Sigmoid colon (tissue), 7 donors: ENCODE measurements at regions of chr7 and their contacts with region 1.

Region 1: GRCh38 chr7:28853834-28854749 is 104.0 kb downstream of the TRIL start:
- DNase-seq: peak; percentile 87
- H3K4me3 ChIP-seq: peak overlapping the region; percentile 34 to 56 (median 55)
- H3K27ac ChIP-seq: peak overlapping the region in 2 of 4 donors; percentile 19 to 30
- H3K4me1 ChIP-seq: peaks cover 0 to 19% (median 12%) of the 10 kb centered on the region in 4 donors
- H3K27me3 ChIP-seq: no peaks in the 10 kb centered on the region
- CTCF ChIP-seq: peak; percentile 86 to 94 (median 92)
- EP300 ChIP-seq: no peak
- POLR2A ChIP-seq: no peak

Region 2: GRCh38 chr7:28389504-28390395 is 464.3 kb before region 1 on chr7:
- intact Hi-C with region 1: loop called (anchors 1 kb)
- DNase-seq: no peak
- H3K4me3 ChIP-seq: peak overlapping the region; percentile 20 to 45 (median 38)
- H3K27ac ChIP-seq: peak overlapping the region in 1 of 4 donors; percentile 57
- H3K4me1 ChIP-seq: peaks cover 0 to 13% (median 11%) of the 10 kb centered on the region in 4 donors
- H3K27me3 ChIP-seq: no peaks in the 10 kb centered on the region
- CTCF ChIP-seq: peak; percentile 57 to 78 (median 66)
- EP300 ChIP-seq: no peak
- POLR2A ChIP-seq: no peak

Region 3: GRCh38 chr7:28408960-28409715 is 445.0 kb before region 1 on chr7:
- intact Hi-C with region 1: loop called (anchors 5 kb)
- DNase-seq: peak; percentile 99
- H3K4me3 ChIP-seq: peak overlapping the region; percentile 45 to 77 (median 64)
- H3K27ac ChIP-seq: peak overlapping the region; percentile 86 to 93 (median 92)
- H3K4me1 ChIP-seq: peaks cover 0 to 43% (median 23%) of the 10 kb centered on the region in 4 donors
- H3K27me3 ChIP-seq: no peaks in the 10 kb centered on the region
- CTCF ChIP-seq: no peak
- EP300 ChIP-seq: peak in 1 of 4 donors; percentile 6
- POLR2A ChIP-seq: peak; percentile 50 to 67

Region 4: GRCh38 chr7:28536259-28536658 is 317.8 kb before region 1 on chr7:
- intact Hi-C with region 1: loop called (anchors 5 kb)
- DNase-seq: peak; percentile 75
- H3K4me3 ChIP-seq: no peak overlapping the region
- H3K27ac ChIP-seq: no peak overlapping the region
- H3K4me1 ChIP-seq: peaks cover 0 to 6% (median 2%) of the 10 kb centered on the region in 4 donors
- H3K27me3 ChIP-seq: no peaks in the 10 kb centered on the region
- CTCF ChIP-seq: peak; percentile 36 to 79 (median 50)
- EP300 ChIP-seq: no peak
- POLR2A ChIP-seq: no peak

Region 5: GRCh38 chr7:28615091-28615490 is 239.0 kb before region 1 on chr7:
- intact Hi-C with region 1: loop called (anchors 5 kb)
- DNase-seq: no peak
- H3K4me3 ChIP-seq: no peak overlapping the region
- H3K27ac ChIP-seq: no peak overlapping the region
- H3K4me1 ChIP-seq: peaks cover 0 to 7% (median 0%) of the 10 kb centered on the region in 4 donors
- H3K27me3 ChIP-seq: no peaks in the 10 kb centered on the region
- CTCF ChIP-seq: no peak
- EP300 ChIP-seq: no peak
- POLR2A ChIP-seq: no peak

Region 6: GRCh38 chr7:28685644-28686417 is 168.3 kb before region 1 on chr7:
- intact Hi-C with region 1: loop called (anchors 10 kb)
- DNase-seq: peak; percentile 98
- H3K4me3 ChIP-seq: peak overlapping the region; percentile 11 to 50 (median 44)
- H3K27ac ChIP-seq: peak overlapping the region; percentile 81 to 92 (median 87)
- H3K4me1 ChIP-seq: peaks cover 0 to 47% (median 29%) of the 10 kb centered on the region in 4 donors
- H3K27me3 ChIP-seq: no peaks in the 10 kb centered on the region
- CTCF ChIP-seq: no peak
- EP300 ChIP-seq: peak in 2 of 4 donors; percentile 12 to 24
- POLR2A ChIP-seq: peak; percentile 41 to 81

Region 7: GRCh38 chr7:29113384-29114103 is 259.5 kb after region 1 on chr7:
- intact Hi-C with region 1: no loop called
- DNase-seq: no peak
- H3K4me3 ChIP-seq: no peak overlapping the region
- H3K27ac ChIP-seq: peak overlapping the region in 1 of 4 donors; percentile 14
- H3K4me1 ChIP-seq: no peaks in the 10 kb centered on the region
- H3K27me3 ChIP-seq: no peaks in the 10 kb centered on the region
- CTCF ChIP-seq: no peak
- EP300 ChIP-seq: no peak
- POLR2A ChIP-seq: no peak